ENCODE measurements at regions of chr2 and their contacts with region 1.

Region 1: DNA sequence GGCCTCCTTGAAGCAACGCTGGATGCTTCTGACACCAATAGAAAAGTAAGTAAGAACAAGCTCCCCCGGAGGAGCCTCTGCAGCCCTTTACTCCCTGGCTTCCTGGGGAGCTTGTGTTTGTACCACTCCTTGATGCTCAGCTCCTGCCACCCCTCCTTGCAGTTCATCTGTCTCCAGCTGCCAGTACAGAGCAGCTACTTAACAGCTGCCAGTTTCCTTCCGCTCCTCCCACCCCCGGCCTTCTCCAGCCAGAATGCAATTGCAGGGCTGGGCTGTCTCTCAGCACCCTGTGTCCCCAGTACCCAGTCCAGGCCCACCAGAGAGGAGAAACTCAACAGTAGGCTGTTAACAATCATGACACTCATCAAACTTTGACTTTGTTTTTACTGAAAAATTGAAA is 109.4 kb downstream of the AOX1 start:
- DNase-seq: no peak
- H3K4me3 ChIP-seq: no peak overlapping the region
- H3K27ac ChIP-seq: no peak overlapping the region
- H3K4me1 ChIP-seq: no peaks in the 10 kb centered on the region
- H3K27me3 ChIP-seq: no peaks in the 10 kb centered on the region
- CTCF ChIP-seq: no peak
- EP300 ChIP-seq: no peak
- POLR2A ChIP-seq: no peak

Region 2: DNA sequence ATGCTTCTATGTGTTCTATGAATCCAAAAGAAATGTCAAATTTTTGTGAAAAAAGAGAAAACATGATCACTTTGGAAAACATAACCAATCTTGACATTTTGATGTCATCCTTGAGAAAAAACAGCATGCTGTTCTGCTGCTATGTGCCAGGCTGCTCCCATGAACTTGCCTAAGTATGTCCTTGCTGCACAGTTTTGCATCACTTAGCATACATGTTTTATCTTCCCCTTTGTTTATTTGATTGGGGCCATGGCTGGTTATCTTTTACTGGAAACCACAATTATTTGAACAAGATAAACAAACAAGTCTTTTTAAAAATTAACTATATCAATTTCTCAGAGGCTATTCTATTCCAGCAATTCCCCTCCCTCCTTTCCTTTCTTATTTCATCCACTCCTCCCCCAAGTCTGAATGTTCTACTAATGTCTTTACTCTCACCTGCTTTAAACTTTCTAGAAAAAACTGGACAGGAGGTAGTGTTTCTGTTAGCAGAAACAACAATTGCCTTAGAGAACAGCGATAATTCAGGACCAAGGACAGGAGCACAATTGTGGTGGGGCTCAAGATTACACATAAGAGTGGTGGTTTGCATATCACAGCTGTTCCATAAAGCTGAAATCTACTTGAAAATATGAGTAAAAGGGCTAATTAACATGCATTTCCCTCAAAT is 102.7 kb before region 1 on chr2:
- intact Hi-C with region 1: loop called in 3 of 4 experiments (anchors 5 to 10 kb)
- DNase-seq: no peak
- H3K4me3 ChIP-seq: no peak overlapping the region
- H3K27ac ChIP-seq: no peak overlapping the region
- H3K4me1 ChIP-seq: peaks cover 2% of the 10 kb centered on the region
- H3K27me3 ChIP-seq: no peaks in the 10 kb centered on the region
- CTCF ChIP-seq: no peak
- EP300 ChIP-seq: no peak
- POLR2A ChIP-seq: no peak

Region 3: GRCh38 chr2:202278944-202279343 is 1583.8 kb after region 1 on chr2:
- intact Hi-C with region 1: no loop called
- DNase-seq: no peak
- H3K4me3 ChIP-seq: no peak overlapping the region
- H3K27ac ChIP-seq: no peak overlapping the region
- H3K4me1 ChIP-seq: no peaks in the 10 kb centered on the region
- H3K27me3 ChIP-seq: no peaks in the 10 kb centered on the region
- CTCF ChIP-seq: no peak
- EP300 ChIP-seq: no peak
- POLR2A ChIP-seq: no peak